ENCODE measurements at regions of chr1 and their contacts with region 1.

Region 1: DNA sequence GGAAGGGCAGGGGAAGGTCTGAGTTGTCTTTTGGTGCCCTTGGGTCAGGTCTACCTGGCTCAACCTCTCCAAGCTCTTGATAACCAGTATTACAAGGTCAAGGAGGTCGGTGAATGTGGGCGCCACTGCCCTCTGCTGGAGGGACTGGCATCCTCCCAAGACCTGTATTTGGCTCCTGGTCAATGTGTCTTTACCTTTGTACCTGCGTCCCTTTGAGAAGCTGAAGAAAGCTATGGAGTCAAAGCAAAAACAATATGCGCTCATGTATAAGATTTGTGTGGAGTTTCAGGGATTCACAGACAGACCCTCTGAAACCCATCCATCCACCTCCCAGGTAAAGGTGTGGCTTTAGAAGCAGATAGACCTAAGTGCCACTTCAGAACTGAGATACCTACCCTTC is 61.8 kb upstream of the NBL1 start:
- DNase-seq: peak; percentile 88
- H3K4me3 Mint-ChIP-seq: no peak overlapping the region
- H3K27ac Mint-ChIP-seq: no peak overlapping the region
- H3K4me1 Mint-ChIP-seq: peaks cover 12% of the 10 kb centered on the region
- H3K27me3 Mint-ChIP-seq: no peaks in the 10 kb centered on the region

Region 2: DNA sequence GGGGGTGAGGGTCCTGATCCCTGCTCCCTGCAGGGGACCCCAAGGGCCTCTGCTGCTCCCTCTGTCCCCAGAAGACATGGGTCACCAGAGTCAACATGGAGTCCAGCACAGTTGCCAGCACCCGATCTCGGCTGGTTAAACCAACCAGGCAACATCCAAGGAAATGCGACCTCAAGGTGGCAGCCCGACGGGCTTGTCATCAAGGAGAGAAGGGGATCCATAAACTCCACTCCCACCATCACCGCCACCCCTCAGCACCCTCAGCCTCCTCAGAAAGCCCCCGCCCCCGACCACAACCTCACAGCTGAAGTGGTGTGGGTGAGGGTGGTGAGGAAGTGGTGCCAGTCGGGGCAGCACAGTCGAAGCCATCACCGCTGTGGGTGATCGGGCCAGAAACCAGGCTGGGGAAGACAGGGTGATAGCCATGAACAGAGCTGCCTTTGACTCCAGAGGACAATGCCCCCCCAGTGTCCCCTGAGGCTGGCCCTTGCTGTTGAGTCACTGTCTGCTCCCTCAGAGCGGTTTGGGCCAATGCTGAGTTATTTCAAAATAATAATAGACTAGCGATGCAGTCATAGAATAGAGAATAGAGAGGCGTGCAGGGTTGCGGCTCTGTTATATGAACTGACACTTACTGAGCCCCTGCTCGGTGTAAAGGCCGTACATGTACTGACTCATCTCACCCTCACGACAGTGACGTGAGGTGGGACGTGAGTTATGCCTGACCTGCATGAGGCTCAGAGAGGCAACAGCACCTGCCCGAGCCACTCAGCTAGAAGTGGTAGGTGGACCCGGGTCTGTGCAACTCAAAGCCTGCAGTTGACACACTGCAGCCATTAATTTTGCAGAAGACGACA is 537.1 kb before region 1 on chr1:
- CTCF ChIA-PET with region 1: no interaction called
- POLR2A ChIA-PET with region 1: no interaction called
- intact Hi-C with region 1: no loop called
- DNase-seq: peak; percentile 46
- H3K4me3 Mint-ChIP-seq: no peak overlapping the region
- H3K27ac Mint-ChIP-seq: no peak overlapping the region
- H3K4me1 Mint-ChIP-seq: peaks cover 8% of the 10 kb centered on the region
- H3K27me3 Mint-ChIP-seq: peaks cover 11% of the 10 kb centered on the region

Region 3: DNA sequence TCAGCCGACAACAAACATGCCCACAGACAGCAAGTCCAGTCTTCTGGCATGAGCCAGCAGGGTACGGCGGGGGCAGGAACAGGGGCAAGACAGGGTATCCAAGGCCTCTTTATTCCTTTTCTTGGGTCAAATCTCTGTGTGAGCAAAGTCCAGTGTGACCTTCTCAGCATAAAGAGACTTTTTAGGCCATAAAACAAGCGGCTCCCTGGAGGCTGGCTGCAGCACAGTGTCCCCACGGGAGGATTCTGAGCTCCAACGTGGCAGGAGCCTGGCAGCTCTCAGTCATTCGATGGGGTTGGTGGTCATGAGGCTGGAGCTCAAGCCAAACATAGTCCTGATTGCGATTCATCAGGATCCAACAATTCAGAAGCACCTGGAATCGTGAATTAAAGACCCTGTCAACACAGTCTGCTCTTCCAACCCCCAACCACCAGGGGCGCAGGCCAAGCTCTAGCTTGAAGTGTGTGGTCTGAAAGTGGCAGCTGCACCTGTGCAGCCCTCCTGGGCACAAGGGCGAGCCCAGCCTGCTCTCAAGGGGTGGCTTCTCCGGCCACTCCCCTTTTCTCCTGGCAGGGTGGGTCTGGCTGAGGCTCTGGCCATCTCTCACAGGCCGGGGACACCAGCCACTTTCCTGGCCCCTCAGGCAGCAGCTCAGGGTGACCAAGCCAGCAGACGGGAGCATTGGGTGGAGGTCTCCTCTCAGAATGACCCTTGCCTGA is 208.1 kb before region 1 on chr1:
- CTCF ChIA-PET with region 1: interaction called, 21 read pairs
- POLR2A ChIA-PET with region 1: no interaction called
- intact Hi-C with region 1: no loop called
- DNase-seq: no peak
- H3K4me3 Mint-ChIP-seq: no peak overlapping the region
- H3K27ac Mint-ChIP-seq: no peak overlapping the region
- H3K4me1 Mint-ChIP-seq: peaks cover 40% of the 10 kb centered on the region
- H3K27me3 Mint-ChIP-seq: no peaks in the 10 kb centered on the region

Region 4: GRCh38 chr1:19405761-19406487 is 176.4 kb before region 1 on chr1:
- CTCF ChIA-PET with region 1: interaction called, 11 read pairs
- POLR2A ChIA-PET with region 1: no interaction called
- intact Hi-C with region 1: no loop called
- DNase-seq: no peak
- H3K4me3 Mint-ChIP-seq: no peak overlapping the region
- H3K27ac Mint-ChIP-seq: no peak overlapping the region
- H3K4me1 Mint-ChIP-seq: peaks cover 69% of the 10 kb centered on the region
- H3K27me3 Mint-ChIP-seq: no peaks in the 10 kb centered on the region

Region 5: GRCh38 chr1:19460535-19461219 is 121.6 kb before region 1 on chr1:
- CTCF ChIA-PET with region 1: interaction called, 10 read pairs
- POLR2A ChIA-PET with region 1: no interaction called
- intact Hi-C with region 1: no loop called
- DNase-seq: peak; percentile 59
- H3K4me3 Mint-ChIP-seq: no peak overlapping the region
- H3K27ac Mint-ChIP-seq: peak overlapping the region; percentile 78
- H3K4me1 Mint-ChIP-seq: peaks cover 90% of the 10 kb centered on the region
- H3K27me3 Mint-ChIP-seq: no peaks in the 10 kb centered on the region

Region 6: DNA sequence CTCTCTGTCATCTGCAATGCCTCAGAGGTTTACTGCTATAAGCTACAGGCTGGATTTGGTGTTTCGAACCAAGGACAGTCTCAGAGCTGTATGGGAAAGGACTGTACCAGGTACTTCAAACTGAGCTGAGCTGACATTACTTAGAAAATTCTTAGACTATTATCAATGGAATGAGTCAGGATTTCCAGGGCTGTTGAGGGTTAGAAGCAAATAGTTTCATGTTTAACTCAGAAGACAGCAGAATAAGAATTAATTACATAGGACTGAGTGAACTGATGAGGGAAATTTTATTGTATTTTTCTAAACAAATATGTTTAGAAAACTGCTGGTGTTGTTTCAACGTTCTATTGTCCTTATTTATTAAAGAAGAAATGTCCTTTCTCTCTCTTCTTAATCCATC is 22.7 kb before region 1 on chr1:
- CTCF ChIA-PET with region 1: interaction called, 14 read pairs
- POLR2A ChIA-PET with region 1: no interaction called
- intact Hi-C with region 1: no loop called
- DNase-seq: no peak
- H3K4me3 Mint-ChIP-seq: no peak overlapping the region
- H3K27ac Mint-ChIP-seq: no peak overlapping the region
- H3K4me1 Mint-ChIP-seq: peaks cover 8% of the 10 kb centered on the region
- H3K27me3 Mint-ChIP-seq: no peaks in the 10 kb centered on the region

Region 7: DNA sequence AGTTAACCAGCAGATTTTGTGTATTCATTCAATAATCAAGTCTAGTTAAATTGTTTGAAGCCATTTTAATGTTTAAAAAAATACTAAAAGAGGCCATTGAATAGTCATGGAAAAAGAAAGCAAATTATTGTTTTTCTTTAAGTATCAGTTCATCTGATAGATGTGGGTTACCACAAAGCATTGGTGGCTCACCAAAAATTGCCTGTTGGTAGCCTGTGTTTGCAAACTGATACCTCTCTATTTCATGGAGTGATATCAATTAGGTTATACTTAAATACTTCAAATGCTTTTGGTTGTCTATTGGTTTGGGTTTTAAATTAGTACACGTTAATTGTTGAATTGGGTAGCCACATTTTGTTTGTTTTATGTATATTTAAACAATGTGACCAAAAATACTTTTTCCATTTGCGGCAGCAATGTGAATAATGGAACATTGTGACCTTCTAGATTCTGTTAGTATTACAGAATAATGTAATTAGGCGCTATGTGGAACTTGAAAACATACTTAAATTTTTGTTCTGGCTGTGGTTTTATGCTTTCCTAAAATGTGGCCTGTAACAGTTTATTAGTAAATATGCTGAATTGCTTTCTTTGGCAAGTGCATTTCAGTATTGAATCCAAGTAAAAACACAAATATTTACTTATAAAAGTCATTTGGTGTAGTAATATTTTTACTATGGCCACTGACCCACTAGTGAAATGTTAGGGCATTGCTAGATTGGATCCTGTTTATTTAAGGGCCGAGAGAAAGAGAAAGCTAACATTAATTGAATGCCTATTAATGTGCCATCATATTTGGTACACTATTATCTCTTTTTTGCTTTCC is 24.7 kb after region 1 on chr1:
- CTCF ChIA-PET with region 1: interaction called, 10 read pairs
- POLR2A ChIA-PET with region 1: no interaction called
- intact Hi-C with region 1: no loop called
- DNase-seq: peak; percentile 69
- H3K4me3 Mint-ChIP-seq: no peak overlapping the region
- H3K27ac Mint-ChIP-seq: peak overlapping the region; percentile 75
- H3K4me1 Mint-ChIP-seq: peaks cover 57% of the 10 kb centered on the region
- H3K27me3 Mint-ChIP-seq: no peaks in the 10 kb centered on the region

Region 8: GRCh38 chr1:19676438-19676922 is 94.2 kb after region 1 on chr1:
- CTCF ChIA-PET with region 1: no interaction called
- POLR2A ChIA-PET with region 1: no interaction called
- intact Hi-C with region 1: no loop called
- DNase-seq: peak; percentile 31
- H3K4me3 Mint-ChIP-seq: no peak overlapping the region
- H3K27ac Mint-ChIP-seq: no peak overlapping the region
- H3K4me1 Mint-ChIP-seq: no peaks in the 10 kb centered on the region
- H3K27me3 Mint-ChIP-seq: peaks cover 2% of the 10 kb centered on the region

Measured in activated CD4-positive, alpha-beta memory T cell treated with anti-CD3 and anti-CD28 coated beads for 36 hours (primary cell).